Right cardiac atrium (tissue), 5 donors: ENCODE measurements at regions of chr19 and their contacts with region 1.

Region 1: DNA sequence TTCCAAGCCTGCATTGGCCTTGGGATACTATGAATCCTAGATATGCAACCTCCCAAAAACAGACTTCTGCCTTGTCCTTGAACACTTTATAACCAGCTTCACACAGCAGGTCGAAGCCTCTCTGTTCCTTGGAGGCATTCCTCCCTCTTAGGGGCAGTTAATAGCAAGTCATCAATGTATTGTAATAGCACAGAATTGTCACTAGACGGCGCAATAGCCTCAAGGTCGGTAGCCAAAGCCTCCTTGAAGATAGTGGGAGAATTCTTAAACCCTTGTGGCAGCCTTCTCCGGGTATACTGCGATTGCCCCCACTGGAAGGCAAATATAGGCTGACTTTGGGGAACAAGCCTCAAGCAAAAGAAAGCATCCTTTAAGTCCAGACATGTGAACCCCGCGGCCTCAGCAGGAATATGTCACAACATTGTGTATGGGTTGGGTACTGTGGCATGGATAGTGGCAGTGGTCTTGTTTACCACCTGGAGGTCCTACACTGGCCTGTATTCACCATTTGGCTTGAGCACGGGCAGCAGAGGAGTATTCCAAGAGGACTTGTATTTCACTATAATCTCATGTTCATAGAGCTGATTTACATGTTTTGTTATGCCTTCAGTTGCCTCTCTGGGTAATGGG is 61.1 kb downstream of the ZNF431 start:
- DNase-seq: no peak
- ATAC-seq: peak in 1 of 2 donors; percentile 61
- H3K4me3 ChIP-seq: no peak overlapping the region
- H3K27ac ChIP-seq: no peak overlapping the region
- H3K4me1 ChIP-seq: no peaks in the 10 kb centered on the region
- H3K27me3 ChIP-seq: no peaks in the 10 kb centered on the region

Region 2: GRCh38 chr19:21474671-21475181 is 271.7 kb after region 1 on chr19:
- intact Hi-C with region 1: loop called in 1 of 4 experiments (anchors 10 kb)
- DNase-seq: peak; percentile 84 to 95 (median 93)
- ATAC-seq: peak; percentile 100
- H3K4me3 ChIP-seq: peak overlapping the region; percentile 37
- H3K27ac ChIP-seq: no peak overlapping the region
- H3K4me1 ChIP-seq: no peaks in the 10 kb centered on the region
- H3K27me3 ChIP-seq: no peaks in the 10 kb centered on the region